ENCODE measurements at regions of chr6 and their contacts with region 1.

Region 1: GRCh38 chr6:43769526-43770416 is at the start of gene VEGFA:
- DNase-seq: peak; percentile 96
- total RNA-seq, gene VEGFA: 233 TPM

Region 2: GRCh38 chr6:43723737-43724295 is 46.0 kb before region 1 on chr6:
- intact Hi-C with region 1: loop called (anchors 5 kb)
- DNase-seq: peak; percentile 83

Region 3: DNA sequence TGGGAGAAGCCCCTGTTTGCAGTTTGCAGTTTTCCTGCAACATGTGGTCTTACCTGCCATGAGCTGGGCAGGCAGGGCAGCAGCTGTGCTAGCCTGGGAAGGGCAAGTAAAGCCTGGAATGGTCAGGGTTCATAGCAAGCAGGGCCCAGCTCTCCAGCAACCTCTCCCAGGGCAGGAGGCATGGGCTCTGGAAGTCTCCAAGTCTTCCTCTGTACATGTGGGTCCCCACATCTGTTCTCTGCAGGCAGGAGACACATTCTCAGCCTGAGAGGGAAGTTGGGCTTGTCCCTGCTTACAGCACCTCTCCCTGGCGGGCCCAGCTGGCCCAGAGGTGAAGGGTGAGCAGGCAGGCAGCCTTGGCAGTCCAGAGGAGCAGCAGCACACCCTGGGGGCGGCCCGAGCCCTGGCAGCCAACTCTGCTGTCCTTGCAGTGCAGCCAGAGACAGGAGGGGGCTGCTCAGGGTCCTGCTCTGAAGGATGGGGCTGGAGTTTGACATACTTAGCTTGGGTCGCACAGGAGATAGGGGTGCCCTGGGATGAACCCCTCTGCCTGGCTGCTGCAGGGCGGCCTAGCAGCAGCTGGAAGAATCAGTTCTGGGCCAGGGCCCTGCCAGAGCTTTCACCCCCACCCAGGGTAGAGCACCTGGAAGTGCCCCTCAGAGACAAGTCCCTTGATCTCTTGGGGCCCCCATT is 181.4 kb after region 1 on chr6:
- intact Hi-C with region 1: loop called (anchors 1 kb)
- DNase-seq: peak; percentile 79

Region 4: GRCh38 chr6:44074439-44075136 is 304.8 kb after region 1 on chr6:
- intact Hi-C with region 1: loop called (anchors 1 kb)
- DNase-seq: no peak

Measured in cardiac septum (tissue), 1 donor.